ENCODE measurements at regions of chr4 and their contacts with region 1.

Region 1: GRCh38 chr4:15231265-15232091 is 196.4 kb upstream of the C1QTNF7 start:
- DNase-seq: peak; percentile 28
- ATAC-seq: peak; percentile 78; the same call in 1 of the 2 replicates
- H3K4me3 ChIP-seq: no peak overlapping the region
- H3K27ac ChIP-seq: no peak overlapping the region
- H3K4me1 ChIP-seq: no peaks in the 10 kb centered on the region
- H3K27me3 ChIP-seq: no peaks in the 10 kb centered on the region
- CTCF ChIP-seq: peak; percentile 72

Region 2: DNA sequence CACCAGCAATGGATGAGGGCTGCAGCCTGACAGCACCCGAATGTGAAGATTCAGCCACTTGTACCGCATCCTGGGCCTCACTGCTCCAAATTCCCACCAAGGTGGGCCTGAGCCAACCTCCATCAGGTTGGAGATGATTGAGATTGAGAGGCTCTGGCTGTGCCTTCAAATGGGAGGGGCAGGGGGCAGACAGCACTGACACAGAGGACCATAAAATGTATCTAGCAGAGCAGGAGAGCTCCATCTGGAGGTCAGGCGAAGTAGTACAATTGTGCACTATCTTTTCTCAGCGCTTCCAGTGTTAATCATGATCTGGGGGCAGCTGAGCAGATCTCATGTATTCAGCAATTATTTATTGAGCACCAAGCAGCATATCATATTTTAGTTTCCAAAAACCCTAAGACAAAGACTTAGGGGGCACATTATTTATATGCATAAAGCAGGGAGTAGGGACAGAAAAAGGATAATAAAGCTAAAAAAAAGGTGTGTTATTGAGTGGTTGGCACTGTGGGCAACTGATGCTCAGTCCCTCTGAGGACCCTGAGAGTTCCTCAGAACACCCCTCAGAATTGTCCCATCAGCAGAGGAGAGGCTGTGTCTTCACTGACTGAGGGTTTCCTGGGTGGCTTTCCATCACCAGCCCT is 164.8 kb after region 1 on chr4:
- CTCF ChIA-PET with region 1: no interaction called
- POLR2A ChIA-PET with region 1: no interaction called
- in situ Hi-C with region 1: no loop called
- intact Hi-C with region 1: loop called (anchors 10 kb)
- DNase-seq: peak; percentile 18
- ATAC-seq: no peak
- H3K4me3 ChIP-seq: no peak overlapping the region
- H3K27ac ChIP-seq: no peak overlapping the region
- H3K4me1 ChIP-seq: no peaks in the 10 kb centered on the region
- H3K27me3 ChIP-seq: no peaks in the 10 kb centered on the region
- CTCF ChIP-seq: peak; percentile 74

Region 3: DNA sequence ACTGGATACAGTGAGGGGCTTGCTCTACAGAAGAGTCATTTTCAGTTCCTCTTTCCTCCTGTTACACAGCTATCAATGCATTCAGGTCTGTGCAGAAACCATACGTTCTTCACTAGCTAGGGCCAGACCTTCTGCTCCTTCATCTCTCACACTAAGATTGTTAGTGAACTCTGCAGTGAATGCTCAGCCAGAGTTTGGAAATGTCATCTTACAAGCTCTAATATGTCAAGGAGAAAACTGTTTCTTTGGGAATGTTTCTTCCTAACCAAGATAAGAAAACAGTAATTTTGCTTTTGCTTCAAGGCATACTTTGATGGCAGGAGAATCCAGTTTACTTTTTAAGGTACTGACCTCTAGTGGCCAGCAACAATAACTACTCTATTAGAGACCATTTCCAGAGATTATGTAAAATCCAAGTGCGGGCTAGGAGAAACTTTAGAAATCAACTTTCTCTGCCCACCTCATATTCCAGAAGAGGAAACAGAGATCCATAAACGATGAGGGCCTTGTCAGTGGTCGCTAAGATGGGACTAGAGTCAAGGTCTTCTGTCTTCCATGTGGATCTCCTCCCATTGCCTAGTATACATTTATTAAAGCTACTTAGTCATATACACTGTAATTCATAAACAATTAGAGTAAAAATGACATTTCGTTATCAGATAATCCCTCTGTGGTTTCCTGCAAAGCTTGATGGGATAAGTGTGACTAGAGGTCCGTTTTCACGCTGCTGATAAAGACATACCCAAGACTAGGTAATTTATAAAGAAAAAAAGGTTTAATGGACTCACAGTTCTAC is 226.1 kb after region 1 on chr4:
- CTCF ChIA-PET with region 1: no interaction called
- POLR2A ChIA-PET with region 1: no interaction called
- in situ Hi-C with region 1: no loop called
- intact Hi-C with region 1: loop called (anchors 2 kb)
- DNase-seq: no peak
- ATAC-seq: peak; percentile 69; the same call in 1 of the 2 replicates
- H3K4me3 ChIP-seq: no peak overlapping the region
- H3K27ac ChIP-seq: no peak overlapping the region
- H3K4me1 ChIP-seq: no peaks in the 10 kb centered on the region
- H3K27me3 ChIP-seq: no peaks in the 10 kb centered on the region
- CTCF ChIP-seq: peak; percentile 66